ENCODE measurements at regions of chr2 and their contacts with region 1.

Region 1: DNA sequence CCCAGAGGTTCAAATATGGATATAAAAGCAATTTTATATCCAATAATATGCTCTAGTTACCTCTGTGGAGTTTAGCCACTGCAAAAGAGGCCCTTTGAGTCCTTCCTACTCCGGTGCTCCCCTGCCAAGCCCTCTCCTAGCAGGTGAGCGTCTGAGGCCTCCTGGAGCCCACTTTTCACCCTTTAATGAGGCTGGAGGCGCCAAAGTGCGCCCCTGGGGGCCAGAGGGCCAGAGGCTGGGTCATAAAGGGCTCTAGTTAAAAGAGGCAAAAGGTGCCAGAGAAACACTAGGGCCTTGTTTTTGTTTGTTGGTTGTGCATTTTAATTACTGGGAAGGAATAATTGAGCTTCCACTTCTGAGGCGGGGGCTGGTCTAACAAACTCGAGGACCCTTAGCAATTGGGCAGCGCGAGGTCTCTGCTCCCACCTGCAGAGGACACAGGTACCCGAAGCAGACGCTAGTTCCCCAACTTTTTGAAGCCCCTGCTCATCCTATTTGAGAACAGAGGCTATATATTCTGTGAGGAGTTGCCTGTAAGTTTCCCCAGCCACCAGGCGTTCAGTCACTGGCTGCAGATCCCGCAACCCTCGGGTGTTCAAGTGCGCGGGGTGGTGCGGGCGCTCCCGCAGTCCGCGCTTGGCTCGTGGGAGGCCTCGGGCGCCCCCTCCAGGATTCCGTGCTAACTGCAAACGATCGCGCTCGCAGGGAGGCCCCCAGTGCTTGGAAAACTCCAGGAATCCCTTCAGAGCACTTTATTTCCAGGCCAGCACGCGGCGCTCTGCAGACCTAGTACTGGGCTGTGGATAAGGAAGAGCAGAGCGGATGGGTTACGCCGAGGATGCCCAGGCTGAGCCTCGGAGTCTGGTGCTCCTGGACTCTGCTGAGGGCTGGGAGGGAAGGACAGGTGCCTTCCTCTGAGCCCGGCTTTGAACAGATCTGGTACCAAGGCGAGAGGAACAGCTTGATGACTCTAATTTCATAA is 14.1 kb downstream of the MSGN1 start:
- DNase-seq: peak; percentile 72 to 83
- ATAC-seq: peak; percentile 83 to 97 (median 94)
- H3K4me3 ChIP-seq: peak overlapping the region in 6 of 10 donors; percentile 14 to 39 (median 26)
- H3K27ac ChIP-seq: no peak overlapping the region
- H3K4me1 ChIP-seq: peaks cover 0 to 11% (median 7%) of the 10 kb centered on the region in 9 donors
- H3K27me3 ChIP-seq: peaks cover 0 to 19% (median 0%) of the 10 kb centered on the region in 7 donors
- CTCF ChIP-seq: peak; percentile 67 to 97 (median 92)

Region 2: DNA sequence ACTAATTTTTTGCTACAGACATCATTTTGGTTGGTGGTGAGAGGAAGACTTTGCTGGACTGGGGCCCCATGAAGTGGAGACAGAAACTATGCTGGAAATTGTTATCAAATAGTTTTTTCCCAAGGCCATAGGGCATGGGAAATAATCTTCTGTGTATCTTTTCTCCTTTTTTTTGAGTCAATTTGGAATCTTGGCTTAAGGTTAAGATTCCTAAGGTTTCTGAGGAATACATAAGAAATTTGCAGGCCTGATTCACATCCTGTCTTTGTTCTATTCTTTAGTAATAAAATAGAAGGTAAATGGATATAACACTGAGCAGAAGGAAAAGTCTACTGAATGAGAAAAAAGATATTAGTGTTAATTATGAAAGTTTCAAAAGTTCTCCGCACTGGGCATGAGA is 93.4 kb before region 1 on chr2:
- intact Hi-C with region 1: loop called in 1 of 10 experiments (anchors 10 kb)
- DNase-seq: no peak
- ATAC-seq: peak in 1 of 8 donors; percentile 33
- H3K4me3 ChIP-seq: no peak overlapping the region
- H3K27ac ChIP-seq: peak overlapping the region in 8 of 10 donors; percentile 8 to 68 (median 22)
- H3K4me1 ChIP-seq: peaks cover 0 to 21% (median 0%) of the 10 kb centered on the region in 9 donors
- H3K27me3 ChIP-seq: no peaks in the 10 kb centered on the region
- CTCF ChIP-seq: no peak

Region 3: GRCh38 chr2:17753803-17754663 is 76.3 kb before region 1 on chr2 and contains the starts of genes GEN1 and SMC6:
- intact Hi-C with region 1: loop called in 4 of 10 experiments (anchors 2 to 10 kb)
- DNase-seq: peak; percentile 89 to 93
- ATAC-seq: peak; percentile 96 to 99 (median 98)
- H3K4me3 ChIP-seq: peak within 1 kb of the TSS; percentile 81 to 98 (median 92)
- H3K27ac ChIP-seq: peak within 1 kb of the TSS; percentile 93 to 99 (median 98)
- H3K4me1 ChIP-seq: peaks cover 0 to 51% (median 29%) of the 10 kb centered on the region in 9 donors
- H3K27me3 ChIP-seq: no peaks in the 10 kb centered on the region
- CTCF ChIP-seq: no peak
- total RNA-seq, gene GEN1: 2.8 to 5.4 (median 3.8) TPM
- total RNA-seq, gene SMC6: 9.4 to 14.7 (median 12.3) TPM

Region 4: GRCh38 chr2:17966798-17967197 is 136.5 kb after region 1 on chr2:
- intact Hi-C with region 1: no loop called
- DNase-seq: no peak
- ATAC-seq: no peak
- H3K4me3 ChIP-seq: no peak overlapping the region
- H3K27ac ChIP-seq: no peak overlapping the region
- H3K4me1 ChIP-seq: no peaks in the 10 kb centered on the region
- H3K27me3 ChIP-seq: peaks cover 0 to 8% (median 0%) of the 10 kb centered on the region in 7 donors
- CTCF ChIP-seq: no peak